ENCODE measurements at regions of chr2 and their contacts with region 1.

Region 1: GRCh38 chr2:156332534-156333273 is at the start of gene NR4A2:
- DNase-seq: peak; percentile 92
- ATAC-seq: peak; percentile 69
- H3K4me3 ChIP-seq: peak within 1 kb of the TSS; percentile 88
- H3K27ac ChIP-seq: peak within 1 kb of the TSS; percentile 93
- H3K4me1 ChIP-seq: no peaks in the 10 kb centered on the region; the same call in none of the 2 replicates
- H3K27me3 ChIP-seq: no peaks in the 10 kb centered on the region
- CTCF ChIP-seq: no peak
- POLR2A ChIP-seq: peak; percentile 99
- RAD21 ChIP-seq: no peak
- total RNA-seq, gene NR4A2: 0.72 and 2.8 TPM in 2 replicates

Region 2: DNA sequence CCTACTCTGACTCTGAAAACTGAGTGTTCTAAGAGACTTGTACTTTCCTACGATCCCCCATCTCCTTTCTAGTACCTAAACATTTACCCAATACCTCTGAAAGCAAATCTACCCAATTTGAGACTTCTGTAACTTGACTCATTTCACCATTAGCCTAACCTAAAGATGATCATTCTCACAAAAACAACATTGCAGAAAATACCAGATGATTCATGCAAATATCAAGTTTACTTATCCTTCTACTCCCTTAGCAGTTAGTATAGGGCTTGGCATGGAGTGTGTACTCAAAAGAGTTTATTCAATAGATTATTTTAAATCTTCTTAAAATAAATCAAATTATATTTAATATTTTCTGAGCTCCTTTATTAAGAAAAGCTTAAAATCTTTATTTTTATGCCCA is 89.8 kb before region 1 on chr2:
- CTCF ChIA-PET with region 1: no interaction called
- POLR2A ChIA-PET with region 1: no interaction called
- dilution Hi-C with region 1: no loop called
- in situ Hi-C with region 1: no loop called
- intact Hi-C with region 1: no loop called
- DNase-seq: no peak
- ATAC-seq: no peak
- H3K4me3 ChIP-seq: no peak overlapping the region
- H3K27ac ChIP-seq: no peak overlapping the region
- H3K4me1 ChIP-seq: no peaks in the 10 kb centered on the region
- H3K27me3 ChIP-seq: no peaks in the 10 kb centered on the region
- CTCF ChIP-seq: no peak
- POLR2A ChIP-seq: no peak
- RAD21 ChIP-seq: no peak

Region 3: DNA sequence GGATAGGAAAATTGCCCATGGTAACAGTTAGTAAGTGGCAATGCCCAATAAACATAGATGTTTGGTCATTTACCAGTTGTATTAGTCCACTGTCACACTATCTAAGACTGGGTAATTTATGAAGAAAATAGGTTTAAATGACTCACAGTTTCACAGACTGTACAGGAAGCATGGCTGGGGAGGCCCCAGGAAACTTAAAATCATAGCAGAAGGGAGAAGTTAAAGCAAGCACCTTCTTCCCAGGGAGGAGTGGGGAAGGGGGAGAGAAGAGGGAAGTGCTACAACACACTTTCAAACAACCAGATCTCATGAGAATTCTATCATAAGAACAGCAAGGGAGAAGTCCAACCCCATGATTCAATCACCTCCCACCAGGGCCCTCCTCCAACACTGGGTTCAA is 23.5 kb before region 1 on chr2:
- CTCF ChIA-PET with region 1: no interaction called
- POLR2A ChIA-PET with region 1: no interaction called
- dilution Hi-C with region 1: no loop called
- in situ Hi-C with region 1: no loop called
- intact Hi-C with region 1: no loop called
- DNase-seq: no peak
- ATAC-seq: no peak
- H3K4me3 ChIP-seq: no peak overlapping the region
- H3K27ac ChIP-seq: no peak overlapping the region
- H3K4me1 ChIP-seq: no peaks in the 10 kb centered on the region
- H3K27me3 ChIP-seq: no peaks in the 10 kb centered on the region
- CTCF ChIP-seq: no peak
- POLR2A ChIP-seq: no peak
- RAD21 ChIP-seq: no peak

Region 4: GRCh38 chr2:156349161-156349560 is 16.5 kb after region 1 on chr2:
- CTCF ChIA-PET with region 1: no interaction called
- POLR2A ChIA-PET with region 1: no interaction called
- dilution Hi-C with region 1: no loop called
- in situ Hi-C with region 1: no loop called
- intact Hi-C with region 1: no loop called
- DNase-seq: no peak
- ATAC-seq: no peak
- H3K4me3 ChIP-seq: no peak overlapping the region
- H3K27ac ChIP-seq: no peak overlapping the region
- H3K4me1 ChIP-seq: no peaks in the 10 kb centered on the region
- H3K27me3 ChIP-seq: no peaks in the 10 kb centered on the region
- CTCF ChIP-seq: no peak
- POLR2A ChIP-seq: no peak
- RAD21 ChIP-seq: no peak

Region 5: GRCh38 chr2:156400706-156401678 is 68.3 kb after region 1 on chr2:
- CTCF ChIA-PET with region 1: interaction called, 3 read pairs
- POLR2A ChIA-PET with region 1: no interaction called
- dilution Hi-C with region 1: no loop called
- in situ Hi-C with region 1: no loop called
- intact Hi-C with region 1: loop called (anchors 1 kb)
- DNase-seq: peak; percentile 85
- ATAC-seq: peak; percentile 92
- H3K4me3 ChIP-seq: peak overlapping the region; percentile 55
- H3K27ac ChIP-seq: no peak overlapping the region
- H3K4me1 ChIP-seq: peaks cover 5% of the 10 kb centered on the region
- H3K27me3 ChIP-seq: peaks cover 8% of the 10 kb centered on the region; the same call in 1 of the 2 replicates
- CTCF ChIP-seq: no peak
- POLR2A ChIP-seq: no peak
- RAD21 ChIP-seq: no peak

Region 6: GRCh38 chr2:156466739-156467405 is 134.2 kb after region 1 on chr2:
- CTCF ChIA-PET with region 1: interaction called, 3 read pairs
- POLR2A ChIA-PET with region 1: no interaction called
- dilution Hi-C with region 1: no loop called
- in situ Hi-C with region 1: no loop called
- intact Hi-C with region 1: loop called (anchors 10 kb)
- DNase-seq: peak; percentile 50
- ATAC-seq: peak; percentile 61
- H3K4me3 ChIP-seq: no peak overlapping the region
- H3K27ac ChIP-seq: peak overlapping the region; percentile 62; the same call in 1 of the 2 replicates
- H3K4me1 ChIP-seq: peaks cover 10% of the 10 kb centered on the region
- H3K27me3 ChIP-seq: no peaks in the 10 kb centered on the region
- CTCF ChIP-seq: no peak
- POLR2A ChIP-seq: no peak
- RAD21 ChIP-seq: no peak

Region 7: DNA sequence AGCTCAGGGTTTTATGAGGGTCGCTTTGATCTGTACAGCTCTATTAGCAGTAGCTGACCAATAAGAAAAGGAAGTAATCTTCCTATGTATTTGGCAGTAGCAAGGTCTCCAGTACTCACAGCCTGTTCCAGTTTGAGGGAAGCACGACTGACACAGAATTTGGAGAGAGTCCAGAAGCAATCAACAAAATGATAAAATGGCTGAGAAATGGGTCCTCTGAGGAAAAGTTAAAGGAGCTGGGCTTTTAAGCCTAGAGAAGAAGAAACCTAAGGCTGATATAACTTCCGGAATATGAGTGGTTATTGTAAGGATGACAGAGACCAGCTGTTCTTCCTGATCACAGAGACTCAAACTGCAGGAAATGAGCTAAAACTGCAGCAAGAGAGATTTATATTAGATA is 486.2 kb after region 1 on chr2:
- CTCF ChIA-PET with region 1: interaction called, 5 read pairs
- POLR2A ChIA-PET with region 1: no interaction called
- dilution Hi-C with region 1: no loop called
- in situ Hi-C with region 1: no loop called
- intact Hi-C with region 1: loop called (anchors 10 kb)
- DNase-seq: peak; percentile 67
- ATAC-seq: peak; percentile 81
- H3K4me3 ChIP-seq: no peak overlapping the region
- H3K27ac ChIP-seq: no peak overlapping the region; the same call in 1 of the 2 replicates
- H3K4me1 ChIP-seq: peaks cover 2% of the 10 kb centered on the region; the same call in 1 of the 2 replicates
- H3K27me3 ChIP-seq: no peaks in the 10 kb centered on the region
- CTCF ChIP-seq: no peak
- POLR2A ChIP-seq: no peak
- RAD21 ChIP-seq: no peak

Region 8: GRCh38 chr2:157182834-157183396 is 850.2 kb after region 1 on chr2:
- CTCF ChIA-PET with region 1: no interaction called
- POLR2A ChIA-PET with region 1: no interaction called
- dilution Hi-C with region 1: no loop called
- in situ Hi-C with region 1: loop called (anchors 5 kb)
- intact Hi-C with region 1: no loop called
- DNase-seq: peak; percentile 97
- ATAC-seq: peak; percentile 80
- H3K4me3 ChIP-seq: no peak overlapping the region
- H3K27ac ChIP-seq: peak overlapping the region; percentile 92
- H3K4me1 ChIP-seq: peaks cover 20% of the 10 kb centered on the region
- H3K27me3 ChIP-seq: no peaks in the 10 kb centered on the region
- CTCF ChIP-seq: no peak
- POLR2A ChIP-seq: peak; percentile 69
- RAD21 ChIP-seq: no peak; the same call in 1 of the 2 replicates

Measured in IMR-90 (cell line).